Right ventricle myocardium superior (tissue), 1 donor: ENCODE measurements at regions of chr14 and their contacts with region 1.

Region 1: GRCh38 chr14:69673578-69674305 is 62.3 kb downstream of the SUSD6 start:
- DNase-seq: no peak
- ATAC-seq: peak; percentile 23

Region 2: GRCh38 chr14:69712599-69713088 is 38.9 kb after region 1 on chr14:
- intact Hi-C with region 1: loop called (anchors 5 kb)
- DNase-seq: peak; percentile 73
- ATAC-seq: peak; percentile 67

Region 3: DNA sequence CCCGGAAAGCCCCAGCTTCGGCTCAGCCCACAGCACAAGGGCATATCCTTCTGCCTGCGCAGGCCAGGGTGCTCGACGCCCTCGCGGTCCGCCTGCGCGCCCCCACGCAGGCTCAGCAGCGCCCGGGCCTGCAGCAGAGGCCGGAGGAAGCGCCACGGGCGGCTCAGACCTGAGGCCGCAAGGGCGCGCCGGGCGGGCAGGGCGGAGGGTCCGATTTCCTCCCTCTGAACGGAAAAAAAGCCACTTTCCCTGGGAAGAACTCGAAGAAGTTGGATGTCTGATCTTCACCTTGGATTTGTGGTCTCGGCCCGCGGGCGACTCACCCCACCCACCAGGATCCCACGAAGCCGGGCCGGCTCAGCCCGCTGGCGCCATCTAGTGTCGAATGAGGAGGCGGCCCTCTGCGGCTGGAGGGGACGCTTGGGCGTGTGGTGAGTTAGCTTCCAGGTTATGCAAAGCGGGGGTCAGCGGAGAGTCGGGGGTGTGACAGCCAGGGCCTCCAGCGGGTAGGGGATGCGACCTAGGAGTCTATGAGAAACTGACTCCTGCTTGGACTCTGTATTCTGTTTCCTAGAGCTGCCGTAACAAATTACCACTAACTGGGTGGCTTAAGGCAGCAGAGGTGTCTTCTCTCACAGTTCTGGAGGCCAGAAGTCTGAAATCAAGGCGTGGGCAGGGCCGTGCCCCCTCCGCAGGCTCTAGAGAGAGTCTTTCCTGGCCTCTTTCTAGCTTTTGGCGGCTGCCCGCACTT is 53.2 kb after region 1 on chr14:
- intact Hi-C with region 1: no loop called
- DNase-seq: peak; percentile 93
- ATAC-seq: peak; percentile 99

Region 4: GRCh38 chr14:69845787-69846186 is 172.0 kb after region 1 on chr14:
- intact Hi-C with region 1: no loop called
- DNase-seq: no peak
- ATAC-seq: no peak